Activated CD4-positive, alpha-beta T cell treated with anti-CD3 and anti-CD28 coated beads, Interleukin-2, amount 10 ng/mL, durations not matched to agents 24 days and 14 days (primary cell): ENCODE measurements at regions of chr5 and their contacts with region 1.

Region 1: DNA sequence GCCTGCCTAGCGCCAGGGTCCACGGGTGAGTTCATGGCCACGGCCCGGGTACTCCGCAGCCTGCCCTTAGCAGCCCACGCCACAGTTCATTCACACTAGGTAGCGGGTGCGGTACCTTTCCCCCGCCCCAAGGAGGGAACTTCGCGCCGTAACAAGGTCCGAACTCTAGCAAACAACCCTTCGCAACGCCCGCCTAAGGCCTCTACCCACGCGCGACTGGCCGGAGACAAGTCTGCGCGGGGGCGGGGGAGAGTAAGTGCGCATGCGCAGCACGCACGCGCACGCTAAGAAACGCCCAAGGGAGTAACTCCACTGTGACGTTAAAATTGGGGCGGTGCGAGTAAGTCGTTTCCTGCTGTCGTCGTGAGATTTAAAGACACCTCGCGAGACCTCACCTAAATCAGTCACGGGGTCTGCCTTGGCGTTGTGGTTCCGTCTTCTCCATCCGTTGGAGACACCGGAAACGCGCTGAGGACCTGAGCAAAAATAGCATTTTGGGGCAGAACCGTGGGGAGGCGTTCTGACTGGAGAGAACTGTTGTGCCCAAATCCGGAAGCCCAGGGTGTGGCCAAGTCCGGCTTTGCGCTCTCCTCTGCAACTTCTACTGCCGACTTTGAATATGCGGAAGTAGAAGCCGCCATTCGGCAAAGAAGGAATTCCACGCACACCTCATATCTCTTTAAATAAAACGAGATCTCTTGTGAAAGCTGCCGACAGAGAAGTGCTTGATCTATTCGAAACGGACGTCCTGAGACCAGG is at the start of gene RAPGEF6:
- DNase-seq: peak; percentile 99
- H3K4me3 Mint-ChIP-seq: peak within 1 kb of the TSS; percentile 96
- H3K27ac Mint-ChIP-seq: peak within 1 kb of the TSS; percentile 96
- H3K4me1 Mint-ChIP-seq: peaks cover 25% of the 10 kb centered on the region
- H3K27me3 Mint-ChIP-seq: peaks cover 3% of the 10 kb centered on the region
- total RNA-seq, gene RAPGEF6: 31.8 and 34.9 TPM in 2 replicates

Region 2: GRCh38 chr5:131263648-131264450 is 371.3 kb before region 1 on chr5 and contains the start of gene CDC42SE2:
- intact Hi-C with region 1: loop called (anchors 5 kb)
- DNase-seq: peak; percentile 97
- H3K4me3 Mint-ChIP-seq: peak within 1 kb of the TSS; percentile 85
- H3K27ac Mint-ChIP-seq: peak within 1 kb of the TSS; percentile 93
- H3K4me1 Mint-ChIP-seq: peaks cover 34% of the 10 kb centered on the region
- H3K27me3 Mint-ChIP-seq: no peaks in the 10 kb centered on the region
- total RNA-seq, gene CDC42SE2: 96.2 and 99.0 TPM in 2 replicates

Region 3: GRCh38 chr5:131595088-131596033 is 39.8 kb before region 1 on chr5:
- intact Hi-C with region 1: loop called (anchors 1 kb)
- DNase-seq: peak; percentile 73
- H3K4me3 Mint-ChIP-seq: peak overlapping the region; percentile 55
- H3K27ac Mint-ChIP-seq: peak overlapping the region; percentile 73
- H3K4me1 Mint-ChIP-seq: peaks cover 43% of the 10 kb centered on the region
- H3K27me3 Mint-ChIP-seq: no peaks in the 10 kb centered on the region

Region 4: DNA sequence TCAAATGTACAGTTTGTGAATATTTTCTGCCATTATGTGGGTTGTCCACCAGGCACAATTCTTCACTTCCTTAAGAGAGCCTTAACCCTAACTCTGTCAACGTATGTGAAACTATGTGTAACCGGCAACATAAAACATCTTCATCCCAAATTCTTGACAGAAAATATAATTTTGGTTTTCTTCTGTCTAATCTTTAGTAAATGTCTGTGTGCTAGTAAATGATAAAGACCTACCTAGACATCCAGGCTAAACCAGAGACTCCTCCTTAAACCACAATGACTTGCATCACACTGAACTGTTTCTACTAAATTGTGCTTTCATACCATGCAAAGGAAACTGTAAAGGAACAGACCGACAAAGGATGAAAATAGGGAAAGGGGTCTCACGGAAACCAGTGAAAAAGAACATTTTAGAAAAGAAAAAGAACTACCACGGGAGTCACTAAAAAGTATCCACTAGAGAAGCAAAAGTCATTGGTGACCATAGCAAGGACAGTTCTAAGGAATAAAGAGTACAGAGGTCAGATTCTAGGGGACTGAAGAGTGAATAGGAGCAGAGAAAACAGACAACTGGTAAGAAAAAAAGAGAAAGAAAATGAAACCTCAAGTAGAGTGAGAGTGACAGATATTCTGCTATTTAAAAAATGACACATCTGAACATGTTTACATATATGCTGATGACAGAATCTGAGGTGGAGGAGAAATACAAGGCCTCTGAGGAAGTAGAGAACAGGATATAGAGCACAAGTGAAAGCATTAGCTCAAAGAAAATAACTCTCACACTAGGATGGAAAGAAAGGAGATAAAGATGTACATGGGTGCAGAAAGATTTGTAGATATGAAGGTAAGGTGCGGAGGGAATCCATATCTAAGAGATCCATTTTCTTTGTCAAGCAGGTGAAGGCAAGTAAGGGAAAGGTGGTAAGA is 112.3 kb after region 1 on chr5:
- intact Hi-C with region 1: loop called (anchors 2 kb)
- DNase-seq: peak; percentile 75
- H3K4me3 Mint-ChIP-seq: peak overlapping the region; percentile 50
- H3K27ac Mint-ChIP-seq: peak overlapping the region; percentile 79
- H3K4me1 Mint-ChIP-seq: peaks cover 33% of the 10 kb centered on the region
- H3K27me3 Mint-ChIP-seq: no peaks in the 10 kb centered on the region

Region 5: DNA sequence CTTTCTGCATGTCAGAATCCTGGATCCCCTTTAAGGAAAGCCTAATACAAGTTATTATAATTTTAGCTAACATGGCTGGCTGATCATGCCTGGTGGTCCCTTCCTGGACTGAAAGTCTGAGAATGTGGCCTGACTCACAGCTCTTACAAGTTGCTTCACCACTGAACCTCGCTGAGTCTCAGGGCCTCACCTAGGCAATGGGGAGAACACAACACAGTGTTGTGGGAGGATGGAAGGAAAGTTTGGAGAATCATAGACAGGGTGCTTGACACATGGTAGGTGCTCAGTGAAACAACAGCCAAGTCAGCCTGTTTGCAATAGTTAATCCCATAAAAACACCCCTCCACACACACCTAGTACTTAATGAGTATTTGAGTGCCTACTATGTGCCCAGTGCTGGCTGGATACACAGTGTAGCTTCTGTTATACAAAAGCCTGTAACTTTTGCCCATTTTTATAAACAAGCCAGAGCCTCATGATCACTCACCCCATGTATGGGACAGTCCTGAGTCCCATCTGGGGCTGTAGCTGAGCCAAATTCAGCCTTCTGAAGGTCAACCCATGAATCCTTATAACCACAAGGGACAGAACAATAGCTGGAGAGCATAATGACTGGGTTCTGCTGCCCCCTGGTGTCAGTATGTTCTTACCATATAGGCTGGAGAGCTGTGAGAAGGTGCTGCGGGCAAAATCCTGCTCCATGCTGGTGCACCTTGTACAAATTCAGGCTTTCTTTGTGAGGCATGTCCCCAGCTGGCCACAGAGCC is 372.4 kb after region 1 on chr5:
- intact Hi-C with region 1: loop called (anchors 5 kb)
- DNase-seq: peak; percentile 93
- H3K4me3 Mint-ChIP-seq: peak overlapping the region; percentile 45
- H3K27ac Mint-ChIP-seq: peak overlapping the region; percentile 71
- H3K4me1 Mint-ChIP-seq: peaks cover 39% of the 10 kb centered on the region
- H3K27me3 Mint-ChIP-seq: peaks cover 37% of the 10 kb centered on the region

Region 6: GRCh38 chr5:132103332-132103951 is 468.3 kb after region 1 on chr5:
- intact Hi-C with region 1: loop called (anchors 1 kb)
- DNase-seq: peak; percentile 92
- H3K4me3 Mint-ChIP-seq: peak overlapping the region; percentile 55
- H3K27ac Mint-ChIP-seq: peak overlapping the region; percentile 98
- H3K4me1 Mint-ChIP-seq: peaks cover 72% of the 10 kb centered on the region
- H3K27me3 Mint-ChIP-seq: no peaks in the 10 kb centered on the region